T-cell (primary cell): ENCODE measurements at regions of chr22 and their contacts with region 1.

Region 1: GRCh38 chr22:33854724-33855123 is 65.6 kb downstream of the LARGE1 start:
- DNase-seq: no peak
- ATAC-seq: no peak
- H3K4me3 ChIP-seq: no peak overlapping the region
- H3K4me3 Mint-ChIP-seq: peak overlapping the region; percentile 44 to 86 (median 77)
- H3K27ac ChIP-seq: no peak overlapping the region
- H3K27ac Mint-ChIP-seq: no peak overlapping the region
- H3K4me1 ChIP-seq: no peaks in the 10 kb centered on the region
- H3K4me1 Mint-ChIP-seq: peaks cover 11 to 18% (median 15%) of the 10 kb centered on the region in 3 donors
- H3K27me3 ChIP-seq: no peaks in the 10 kb centered on the region
- H3K27me3 Mint-ChIP-seq: no peaks in the 10 kb centered on the region

Region 2: GRCh38 chr22:33823552-33823951 is 31.2 kb before region 1 on chr22:
- CTCF ChIA-PET with region 1: no interaction called
- POLR2A ChIA-PET with region 1: no interaction called
- DNase-seq: no peak
- ATAC-seq: no peak
- H3K4me3 ChIP-seq: no peak overlapping the region
- H3K4me3 Mint-ChIP-seq: no peak overlapping the region
- H3K27ac ChIP-seq: no peak overlapping the region
- H3K27ac Mint-ChIP-seq: no peak overlapping the region
- H3K4me1 ChIP-seq: no peaks in the 10 kb centered on the region
- H3K4me1 Mint-ChIP-seq: no peaks in the 10 kb centered on the region
- H3K27me3 ChIP-seq: peaks cover 0 to 2% of the 10 kb centered on the region in 2 experiments
- H3K27me3 Mint-ChIP-seq: no peaks in the 10 kb centered on the region

Region 3: DNA sequence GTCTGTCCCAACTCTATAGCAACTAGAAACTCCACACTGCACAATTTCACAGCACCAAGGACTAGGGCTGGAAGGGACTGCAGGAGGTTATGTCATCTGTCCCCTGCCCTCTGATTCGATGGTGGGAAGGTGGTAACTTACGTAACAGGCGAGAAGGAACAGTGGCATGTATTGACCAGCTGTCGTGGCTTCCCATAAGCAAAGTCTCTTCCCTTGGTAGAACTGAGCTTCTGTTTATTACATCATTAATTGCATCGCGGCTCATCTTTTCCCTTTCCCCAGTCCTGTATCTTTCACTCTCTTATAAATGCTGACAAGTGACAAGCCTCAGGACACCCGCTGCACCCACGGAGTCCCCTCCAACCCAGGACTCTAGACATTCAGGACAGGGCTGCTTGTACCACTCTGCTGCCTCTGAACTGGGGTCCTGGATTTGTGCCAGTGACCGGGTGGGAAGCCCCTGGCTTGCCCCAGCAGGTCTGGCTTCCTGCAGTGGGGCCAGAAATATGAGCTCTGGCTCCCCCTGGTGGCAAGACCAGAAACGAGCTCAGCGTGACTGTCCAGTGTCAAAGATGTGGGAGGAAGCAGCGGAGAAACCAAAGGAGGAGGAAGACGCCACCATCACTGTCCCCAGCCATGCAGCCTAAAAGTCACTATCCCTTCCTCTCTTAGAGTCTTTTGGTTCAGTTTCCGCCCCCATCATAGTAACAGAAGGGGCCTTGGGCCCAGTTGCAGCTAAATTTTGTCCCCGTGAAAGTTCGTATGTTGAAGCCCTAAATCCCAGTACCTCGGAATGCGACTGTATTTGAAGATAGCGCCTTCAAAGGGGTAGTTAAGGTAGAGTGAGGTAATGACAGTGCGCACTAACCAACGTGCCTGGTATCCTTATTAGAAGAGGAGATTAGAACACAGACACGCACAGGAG is 1295.7 kb after region 1 on chr22:
- CTCF ChIA-PET with region 1: no interaction called
- POLR2A ChIA-PET with region 1: interaction called in 1 of 2 experiments, 19 read pairs
- DNase-seq: peak in 32 of 35 experiments; percentile 5 to 63 (median 36)
- ATAC-seq: peak in 1 of 4 experiments; percentile 53
- H3K4me3 ChIP-seq: no peak overlapping the region
- H3K4me3 Mint-ChIP-seq: no peak overlapping the region
- H3K27ac ChIP-seq: no peak overlapping the region
- H3K27ac Mint-ChIP-seq: no peak overlapping the region
- H3K4me1 ChIP-seq: no peaks in the 10 kb centered on the region
- H3K4me1 Mint-ChIP-seq: peaks cover 2 to 9% (median 3%) of the 10 kb centered on the region in 3 donors
- H3K27me3 ChIP-seq: peaks cover 0 to 38% of the 10 kb centered on the region in 2 experiments
- H3K27me3 Mint-ChIP-seq: peaks cover 43 to 49% of the 10 kb centered on the region in 2 donors